Activated naive CD4-positive, alpha-beta T cell treated with anti-CD3 and anti-CD28 coated beads for 36 hours (primary cell): ENCODE measurements at regions of chr17 and their contacts with region 1.

Region 1: DNA sequence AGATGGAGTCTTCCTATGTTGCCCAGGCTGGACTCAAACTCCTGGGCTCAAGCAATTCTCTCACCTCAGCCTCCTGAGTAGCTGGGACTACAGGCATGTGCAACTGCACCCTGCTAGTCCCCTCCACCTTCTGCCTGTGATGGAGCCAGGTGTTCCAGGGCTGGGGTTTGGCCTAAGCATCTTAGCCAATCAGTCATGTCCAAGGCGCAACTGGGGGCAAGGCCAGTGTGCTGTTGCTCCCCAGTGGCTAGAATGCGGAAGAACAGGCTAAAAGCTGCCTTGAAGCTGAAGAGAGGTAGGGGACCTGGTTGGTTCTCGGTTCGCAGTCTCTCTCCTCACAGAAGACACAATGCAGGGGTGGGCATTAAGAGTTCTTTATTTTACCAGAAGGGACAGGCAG is 18.6 kb downstream of the FLOT2 start:
- DNase-seq: peak; percentile 55
- H3K4me3 Mint-ChIP-seq: no peak overlapping the region
- H3K27ac Mint-ChIP-seq: peak overlapping the region; percentile 8
- H3K4me1 Mint-ChIP-seq: peaks cover 37% of the 10 kb centered on the region
- H3K27me3 Mint-ChIP-seq: no peaks in the 10 kb centered on the region

Region 2: GRCh38 chr17:28571255-28572122 is 307.5 kb before region 1 on chr17 and contains the start of gene PIGS:
- CTCF ChIA-PET with region 1: no interaction called
- intact Hi-C with region 1: loop called (anchors 10 kb)
- DNase-seq: peak; percentile 96
- H3K4me3 Mint-ChIP-seq: peak within 1 kb of the TSS; percentile 85
- H3K27ac Mint-ChIP-seq: peak within 1 kb of the TSS; percentile 91
- H3K4me1 Mint-ChIP-seq: peaks cover 50% of the 10 kb centered on the region
- H3K27me3 Mint-ChIP-seq: no peaks in the 10 kb centered on the region
- total RNA-seq, gene PIGS: 34.8 to 36.0 TPM

Region 3: GRCh38 chr17:28842282-28843012 is 36.5 kb before region 1 on chr17 and contains the start of gene FAM222B:
- CTCF ChIA-PET with region 1: no interaction called
- intact Hi-C with region 1: loop called (anchors 5 kb)
- DNase-seq: peak; percentile 88
- H3K4me3 Mint-ChIP-seq: peak within 1 kb of the TSS; percentile 99
- H3K27ac Mint-ChIP-seq: peak within 1 kb of the TSS; percentile 95
- H3K4me1 Mint-ChIP-seq: peaks cover 31% of the 10 kb centered on the region
- H3K27me3 Mint-ChIP-seq: no peaks in the 10 kb centered on the region
- total RNA-seq, gene FAM222B: 11.2 TPM

Region 4: GRCh38 chr17:28854457-28855350 is 24.3 kb before region 1 on chr17 and contains the start of gene ERAL1:
- CTCF ChIA-PET with region 1: interaction called, 8 read pairs
- intact Hi-C with region 1: loop called (anchors 1 kb)
- DNase-seq: peak; percentile 93
- H3K4me3 Mint-ChIP-seq: peak within 1 kb of the TSS; percentile 79
- H3K27ac Mint-ChIP-seq: peak within 1 kb of the TSS; percentile 87
- H3K4me1 Mint-ChIP-seq: peaks cover 25% of the 10 kb centered on the region
- H3K27me3 Mint-ChIP-seq: no peaks in the 10 kb centered on the region
- total RNA-seq, gene ERAL1: 51.2 to 60.4 TPM

Region 5: GRCh38 chr17:29326023-29326813 is 447.2 kb after region 1 on chr17:
- CTCF ChIA-PET with region 1: no interaction called
- intact Hi-C with region 1: no loop called
- DNase-seq: no peak
- H3K4me3 Mint-ChIP-seq: no peak overlapping the region
- H3K27ac Mint-ChIP-seq: no peak overlapping the region
- H3K4me1 Mint-ChIP-seq: no peaks in the 10 kb centered on the region
- H3K27me3 Mint-ChIP-seq: no peaks in the 10 kb centered on the region